ENCODE measurements at regions of chr20 and their contacts with region 1.

Region 1: DNA sequence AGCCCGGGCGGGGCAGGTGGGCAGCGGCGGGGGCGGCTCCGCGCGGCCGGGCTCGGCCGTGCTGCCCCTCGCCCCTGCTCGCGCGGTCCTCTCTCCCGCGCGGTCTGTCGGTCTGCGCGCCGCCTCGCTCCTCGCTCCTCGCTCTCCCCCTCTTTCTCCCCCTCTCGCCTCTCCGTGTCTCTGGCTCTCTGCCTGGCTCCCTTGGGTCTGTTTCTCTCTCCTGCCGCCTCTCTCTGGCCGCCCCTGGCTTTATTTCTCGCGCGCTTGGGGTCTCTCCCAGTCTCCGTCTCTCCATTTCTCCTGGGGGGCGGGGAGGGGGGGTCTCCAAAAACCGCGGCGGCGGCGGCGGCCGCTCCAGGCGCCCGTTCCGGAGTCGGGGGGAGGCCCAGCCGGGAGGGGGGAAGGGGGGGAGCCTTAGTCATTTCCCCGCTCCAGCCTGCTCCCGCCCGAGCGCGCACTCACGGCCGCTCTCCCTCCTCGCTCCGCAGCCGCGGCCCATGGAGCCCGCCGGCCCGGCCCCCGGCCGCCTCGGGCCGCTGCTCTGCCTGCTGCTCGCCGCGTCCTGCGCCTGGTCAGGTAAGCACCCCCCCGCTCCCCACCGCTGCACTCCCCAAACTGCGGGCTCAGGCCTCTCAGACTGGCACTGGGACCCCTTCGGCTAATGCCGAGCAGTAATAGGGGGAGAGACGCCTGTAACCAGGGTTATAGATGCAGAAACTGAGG is at the start of gene SIRPA:
- DNase-seq: peak; percentile 66
- H3K4me3 ChIP-seq: peak within 1 kb of the TSS; percentile 70 to 85 (median 70)
- H3K27ac ChIP-seq: peak within 1 kb of the TSS; percentile 68
- H3K4me1 ChIP-seq: peaks cover 8% of the 10 kb centered on the region
- H3K27me3 ChIP-seq: no peaks in the 10 kb centered on the region
- CTCF ChIP-seq: no peak
- POLR2A ChIP-seq: no peak
- total RNA-seq, gene SIRPA: 58.3 and 59.2 TPM in 2 replicates

Region 2: GRCh38 chr20:2101865-2102584 is 206.9 kb after region 1 on chr20:
- CTCF ChIA-PET with region 1: no interaction called
- POLR2A ChIA-PET with region 1: no interaction called
- dilution Hi-C with region 1: no loop called
- intact Hi-C with region 1: loop called (anchors 10 kb)
- DNase-seq: peak; percentile 90
- H3K4me3 ChIP-seq: peak overlapping the region; percentile 49 to 77 (median 65)
- H3K27ac ChIP-seq: peak overlapping the region; percentile 98
- H3K4me1 ChIP-seq: peaks cover 16% of the 10 kb centered on the region
- H3K27me3 ChIP-seq: peaks cover 0 to 2% of the 10 kb centered on the region in 2 experiments
- CTCF ChIP-seq: no peak
- POLR2A ChIP-seq: peak; percentile 75

Measured in endothelial cell of umbilical vein (primary cell).